ENCODE measurements at regions of chr3 and their contacts with region 1.

Region 1: DNA sequence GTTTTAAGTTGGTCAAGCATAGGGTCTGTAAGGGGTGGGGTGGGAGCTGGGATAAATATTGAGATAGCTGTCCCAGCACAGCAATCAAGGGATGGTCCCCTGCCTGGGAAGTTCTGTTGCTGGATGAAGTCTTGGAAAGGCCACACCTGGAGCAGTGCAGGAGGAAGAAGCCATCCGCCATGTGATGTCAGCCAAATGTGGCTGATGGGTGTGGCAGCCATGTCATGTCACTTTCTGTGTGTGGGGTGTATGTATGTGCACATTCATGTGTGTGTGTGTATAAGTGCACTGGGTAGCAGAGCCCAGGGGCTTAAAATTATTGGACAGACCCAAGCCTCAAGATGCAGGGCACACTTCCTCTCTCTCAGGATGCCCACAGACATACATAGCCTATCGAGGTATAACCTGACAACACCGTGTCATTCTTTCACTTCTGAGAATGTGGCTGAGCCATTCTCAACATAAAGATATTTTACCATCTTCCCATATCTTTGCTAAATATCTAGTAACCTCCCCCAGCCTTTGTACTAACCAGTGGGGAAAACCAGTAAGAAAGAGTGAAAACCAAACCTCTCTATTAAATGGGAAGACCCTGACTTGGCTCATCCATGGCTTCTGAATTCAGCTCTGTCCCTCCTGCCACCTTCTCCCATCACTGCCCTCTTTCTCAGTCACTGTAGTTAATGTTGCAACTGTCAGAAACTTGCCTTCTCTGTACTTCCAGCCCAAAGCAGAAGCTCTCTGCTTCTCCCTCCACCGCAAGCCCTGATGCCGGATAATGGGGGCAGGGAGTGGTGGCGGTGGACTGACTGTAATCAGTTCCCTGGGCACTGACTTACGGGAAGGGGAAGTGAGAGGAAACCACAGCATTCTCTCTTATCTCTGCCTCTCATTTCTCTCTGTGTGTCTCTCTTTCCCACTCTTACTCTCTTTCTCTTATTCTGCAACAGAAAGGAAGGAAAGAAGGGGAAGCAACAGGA is 11.2 kb downstream of the TNFSF10 start:
- DNase-seq: peak; percentile 46 to 76 (median 58)
- H3K4me3 ChIP-seq: peak overlapping the region in 1 of 2 donors; percentile 22
- H3K4me3 Mint-ChIP-seq: peak overlapping the region; percentile 61 to 91 (median 82)
- H3K27ac ChIP-seq: peak overlapping the region; percentile 50
- H3K27ac Mint-ChIP-seq: peak overlapping the region; percentile 91 to 98 (median 95)
- H3K4me1 ChIP-seq: peaks cover 73% of the 10 kb centered on the region
- H3K4me1 Mint-ChIP-seq: peaks cover 59 to 90% (median 74%) of the 10 kb centered on the region in 4 donors
- H3K27me3 ChIP-seq: no peaks in the 10 kb centered on the region
- H3K27me3 Mint-ChIP-seq: no peaks in the 10 kb centered on the region

Region 2: GRCh38 chr3:172530566-172530965 is 18.5 kb after region 1 on chr3:
- CTCF ChIA-PET with region 1: interaction called, 10 read pairs
- POLR2A ChIA-PET with region 1: interaction called, 14 read pairs
- intact Hi-C with region 1: no loop called
- DNase-seq: peak in 4 of 5 donors; percentile 34 to 58 (median 48)
- H3K4me3 ChIP-seq: no peak overlapping the region
- H3K4me3 Mint-ChIP-seq: peak overlapping the region in 7 of 8 donors; percentile 19 to 81 (median 61)
- H3K27ac ChIP-seq: no peak overlapping the region
- H3K27ac Mint-ChIP-seq: peak overlapping the region; percentile 56 to 90 (median 74)
- H3K4me1 ChIP-seq: peaks cover 23% of the 10 kb centered on the region
- H3K4me1 Mint-ChIP-seq: peaks cover 17 to 31% (median 26%) of the 10 kb centered on the region in 4 donors
- H3K27me3 ChIP-seq: no peaks in the 10 kb centered on the region
- H3K27me3 Mint-ChIP-seq: no peaks in the 10 kb centered on the region

Region 3: DNA sequence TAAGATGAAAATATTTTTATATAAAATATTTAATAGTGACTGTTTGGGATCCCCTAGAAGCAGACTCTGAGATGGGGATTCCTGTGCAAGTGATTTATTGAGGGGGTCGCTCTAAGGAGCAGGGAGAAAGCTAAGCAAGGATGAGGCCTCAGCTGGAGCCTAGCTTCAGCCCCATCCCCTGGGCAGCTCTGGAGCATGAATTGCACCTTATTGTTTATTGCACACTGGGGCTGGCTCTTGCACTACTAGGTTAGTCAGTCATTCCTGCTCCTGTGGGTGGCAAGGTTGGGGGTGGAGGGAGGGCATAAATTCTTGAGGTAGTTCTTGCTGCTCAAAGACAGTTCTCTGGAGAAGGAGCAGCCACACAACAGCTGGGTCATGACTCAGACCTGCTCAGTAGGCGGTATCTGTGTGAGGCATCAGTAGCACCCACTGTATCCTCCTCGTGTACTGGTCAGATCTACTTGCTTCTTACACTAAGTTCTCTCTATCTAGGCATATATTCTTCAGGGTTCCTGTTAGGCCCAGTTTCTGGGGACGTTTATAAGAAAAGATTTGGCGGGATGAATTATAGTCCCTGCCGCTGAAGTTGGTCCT is 38.4 kb after region 1 on chr3:
- CTCF ChIA-PET with region 1: no interaction called
- POLR2A ChIA-PET with region 1: no interaction called
- intact Hi-C with region 1: loop called (anchors 5 kb)
- DNase-seq: peak in 1 of 5 donors; percentile 69
- H3K4me3 ChIP-seq: no peak overlapping the region
- H3K4me3 Mint-ChIP-seq: peak overlapping the region in 1 of 8 donors; percentile 35
- H3K27ac ChIP-seq: no peak overlapping the region
- H3K27ac Mint-ChIP-seq: peak overlapping the region in 4 of 7 donors; percentile 37 to 79 (median 61)
- H3K4me1 ChIP-seq: peaks cover 28% of the 10 kb centered on the region
- H3K4me1 Mint-ChIP-seq: peaks cover 14 to 36% (median 20%) of the 10 kb centered on the region in 4 donors
- H3K27me3 ChIP-seq: no peaks in the 10 kb centered on the region
- H3K27me3 Mint-ChIP-seq: no peaks in the 10 kb centered on the region